Vagina (tissue), 2 donors: ENCODE measurements at regions of chr11 and their contacts with region 1.

Region 1: GRCh38 chr11:67160874-67161783 is 42.1 kb downstream of the KDM2A start:
- DNase-seq: no peak
- H3K4me3 ChIP-seq: no peak overlapping the region
- H3K27ac ChIP-seq: no peak overlapping the region
- H3K4me1 ChIP-seq: peaks cover 25% of the 10 kb centered on the region
- H3K27me3 ChIP-seq: no peaks in the 10 kb centered on the region
- CTCF ChIP-seq: no peak
- POLR2A ChIP-seq: no peak

Region 2: DNA sequence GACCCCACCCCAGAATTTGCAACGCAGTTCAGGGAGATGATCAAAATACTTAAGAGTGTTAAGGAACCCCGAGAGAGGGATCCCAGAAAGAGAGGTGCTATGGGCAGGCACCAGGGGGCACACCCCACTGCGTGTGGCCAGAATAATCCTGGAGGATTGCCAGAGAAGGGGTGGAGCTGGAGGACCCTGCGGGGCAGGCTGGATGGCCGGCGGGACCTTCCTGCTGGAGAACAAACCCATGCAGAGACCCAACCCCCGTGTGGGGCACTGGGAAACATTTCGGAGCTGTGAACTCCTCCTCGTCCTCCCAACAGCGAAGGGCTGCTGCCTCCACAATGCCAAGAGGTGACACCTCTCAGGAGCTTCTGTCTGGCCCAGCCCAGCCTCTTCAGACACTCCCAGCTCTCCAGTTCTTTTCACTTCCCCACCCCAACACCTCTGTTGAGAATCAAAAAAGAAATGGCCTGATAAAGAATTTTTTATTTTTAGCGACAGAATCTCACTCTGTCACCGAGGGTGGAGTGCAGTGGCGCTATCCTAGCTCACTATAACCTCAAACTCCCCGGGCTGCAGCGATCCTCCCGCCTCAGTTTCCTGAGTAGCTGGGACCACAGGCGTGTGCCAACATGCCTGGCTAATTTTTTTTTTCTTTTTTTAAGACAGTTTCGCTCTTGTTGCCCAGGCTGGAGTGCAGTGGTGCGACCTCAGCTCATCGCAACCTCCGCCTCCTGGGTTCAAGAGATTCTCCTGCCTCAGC is 78.9 kb before region 1 on chr11:
- intact Hi-C with region 1: loop called (anchors 10 kb)
- DNase-seq: no peak
- H3K4me3 ChIP-seq: peak overlapping the region in 1 of 2 donors; percentile 12
- H3K27ac ChIP-seq: no peak overlapping the region
- H3K4me1 ChIP-seq: peaks cover 22% of the 10 kb centered on the region
- H3K27me3 ChIP-seq: no peaks in the 10 kb centered on the region
- CTCF ChIP-seq: no peak
- POLR2A ChIP-seq: no peak